ENCODE measurements at regions of chr12 and their contacts with region 1.

Region 1: GRCh38 chr12:56359851-56360767 is at the start of gene STAT2:
- DNase-seq: peak; percentile 100
- ATAC-seq: peak; percentile 97
- H3K4me3 Mint-ChIP-seq: peak within 1 kb of the TSS; percentile 93
- H3K27ac Mint-ChIP-seq: peak within 1 kb of the TSS; percentile 95
- H3K4me1 Mint-ChIP-seq: peaks cover 24% of the 10 kb centered on the region
- H3K27me3 Mint-ChIP-seq: no peaks in the 10 kb centered on the region
- total RNA-seq, gene STAT2: 178 to 308 TPM

Region 2: GRCh38 chr12:56338308-56339157 is 21.6 kb before region 1 on chr12 and contains the start of gene IL23A:
- CTCF ChIA-PET with region 1: interaction called, 21 read pairs
- DNase-seq: peak; percentile 87
- ATAC-seq: peak; percentile 41
- H3K4me3 Mint-ChIP-seq: peak within 1 kb of the TSS; percentile 69
- H3K27ac Mint-ChIP-seq: peak within 1 kb of the TSS; percentile 99
- H3K4me1 Mint-ChIP-seq: peaks cover 47% of the 10 kb centered on the region
- H3K27me3 Mint-ChIP-seq: no peaks in the 10 kb centered on the region
- total RNA-seq, gene IL23A: 2.9 to 12.4 TPM

Region 3: DNA sequence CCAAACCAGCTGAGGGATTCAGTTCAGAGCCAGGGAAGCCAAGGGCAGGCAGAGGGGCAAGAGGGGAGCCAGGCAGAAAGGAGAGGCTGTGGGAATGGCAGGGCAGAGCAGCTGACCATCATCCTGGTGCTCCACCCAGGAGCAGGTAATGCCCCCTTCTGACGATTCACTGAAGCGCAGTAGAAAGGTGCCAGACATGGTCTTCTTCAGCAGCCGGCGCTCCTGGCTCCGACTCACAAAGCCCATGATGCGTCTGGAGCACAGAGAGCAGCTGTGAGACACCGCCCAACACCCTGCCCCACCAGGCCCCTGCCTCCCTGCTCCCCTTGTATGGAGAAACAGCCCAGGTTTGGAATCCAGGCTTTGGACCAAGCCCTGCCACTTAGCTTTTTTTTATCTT is 13.4 kb before region 1 on chr12:
- CTCF ChIA-PET with region 1: interaction called, 11 read pairs
- DNase-seq: no peak
- ATAC-seq: peak; percentile 47
- H3K4me3 Mint-ChIP-seq: no peak overlapping the region
- H3K27ac Mint-ChIP-seq: no peak overlapping the region
- H3K4me1 Mint-ChIP-seq: peaks cover 4% of the 10 kb centered on the region
- H3K27me3 Mint-ChIP-seq: no peaks in the 10 kb centered on the region

Region 4: DNA sequence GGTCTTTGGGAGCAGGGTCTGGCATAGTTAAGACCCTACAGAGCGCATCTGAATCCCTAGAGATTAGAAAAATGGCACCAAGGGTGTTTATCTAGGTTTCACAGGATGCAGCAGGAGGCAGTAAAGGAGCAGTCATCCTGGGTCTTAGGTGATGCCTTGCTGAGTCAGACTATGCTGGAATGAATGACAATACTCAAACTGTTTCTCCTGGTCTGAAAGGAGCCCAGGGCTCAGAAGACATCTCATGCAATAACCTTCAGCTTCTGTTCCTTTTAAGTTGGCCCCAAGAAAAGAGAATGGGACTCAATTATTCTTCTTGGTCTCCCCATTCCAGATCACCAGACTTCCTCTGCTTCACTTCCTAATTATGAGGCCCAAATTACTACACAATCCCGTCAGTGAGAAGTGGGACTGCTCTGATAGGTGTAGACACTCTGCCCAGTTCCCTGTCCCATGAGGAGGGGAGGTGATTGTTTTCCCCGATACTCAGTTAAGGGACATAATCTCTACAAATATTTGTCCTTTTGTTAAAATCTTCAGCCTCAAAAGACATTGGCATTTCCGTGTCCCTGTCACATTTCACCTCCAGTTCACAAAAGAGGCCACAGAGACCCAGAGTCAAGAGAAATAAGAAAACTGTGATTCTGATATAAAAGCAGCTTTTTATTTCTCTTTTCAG is 17.3 kb after region 1 on chr12:
- CTCF ChIA-PET with region 1: no interaction called
- DNase-seq: no peak
- ATAC-seq: no peak
- H3K4me3 Mint-ChIP-seq: no peak overlapping the region
- H3K27ac Mint-ChIP-seq: no peak overlapping the region
- H3K4me1 Mint-ChIP-seq: no peaks in the 10 kb centered on the region
- H3K27me3 Mint-ChIP-seq: peaks cover 15% of the 10 kb centered on the region

Region 5: DNA sequence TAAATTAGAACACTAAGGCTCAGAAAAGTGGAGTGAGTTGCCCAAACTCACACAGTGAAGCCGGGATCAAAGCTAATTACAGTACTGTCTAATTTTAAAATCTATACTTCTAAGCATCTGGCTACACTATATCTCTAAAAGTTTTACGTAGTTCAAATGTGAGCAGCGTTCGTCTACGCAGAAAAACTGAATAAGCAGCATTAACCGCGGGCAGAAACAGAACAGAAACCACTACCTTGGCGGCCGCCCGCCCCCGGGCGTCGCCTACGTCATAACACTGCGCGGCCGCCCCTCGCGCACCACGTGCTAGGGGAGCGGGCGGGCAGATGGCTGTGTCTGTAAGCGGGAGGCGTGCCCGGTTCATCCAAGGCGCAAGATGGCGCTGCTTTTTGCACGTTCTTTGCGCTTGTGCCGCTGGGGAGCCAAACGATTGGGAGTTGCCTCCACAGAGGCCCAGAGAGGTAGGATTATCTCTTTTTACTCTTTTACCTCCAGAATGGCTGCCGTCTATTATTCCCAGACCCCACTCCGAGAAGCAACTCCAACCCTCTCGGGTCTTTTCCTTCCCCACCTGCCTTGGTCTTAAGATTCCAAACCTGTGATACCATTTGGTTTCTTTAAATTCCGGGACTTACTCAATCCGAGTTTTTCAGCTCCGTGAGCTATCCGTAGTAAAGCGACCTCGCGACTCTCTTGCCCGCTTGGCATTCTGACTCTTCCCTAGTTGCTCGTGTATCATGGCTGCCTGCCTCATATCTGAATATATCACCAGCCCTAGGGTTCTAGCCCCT is 108.3 kb after region 1 on chr12 and contains the start of gene SPRYD4:
- CTCF ChIA-PET with region 1: interaction called, 21 read pairs
- DNase-seq: peak; percentile 95
- ATAC-seq: peak; percentile 96
- H3K4me3 Mint-ChIP-seq: peak within 1 kb of the TSS; percentile 97
- H3K27ac Mint-ChIP-seq: peak within 1 kb of the TSS; percentile 95
- H3K4me1 Mint-ChIP-seq: peaks cover 29% of the 10 kb centered on the region
- H3K27me3 Mint-ChIP-seq: no peaks in the 10 kb centered on the region
- total RNA-seq, gene SPRYD4: 3.4 to 3.7 TPM

Measured in activated CD8-positive, alpha-beta memory T cell treated with anti-CD3 and anti-CD28 coated beads, Interleukin-2, amount 10 ng/mL, durations not matched to agents 7 days and 5 days (primary cell).